Activated T-helper 2 cell treated with anti-CD3 and anti-CD28 coated beads, Interferon-gamma antibody, Interleukin-2, Interleukin-4, amounts not matched to agents 10 μg/mL and 5 μg/mL and 100 μg/mL, durations not matched to agents 14 hours and 24 hours and 36 hours (primary cell): ENCODE measurements at regions of chr4 and their contacts with region 1.

Region 1: DNA sequence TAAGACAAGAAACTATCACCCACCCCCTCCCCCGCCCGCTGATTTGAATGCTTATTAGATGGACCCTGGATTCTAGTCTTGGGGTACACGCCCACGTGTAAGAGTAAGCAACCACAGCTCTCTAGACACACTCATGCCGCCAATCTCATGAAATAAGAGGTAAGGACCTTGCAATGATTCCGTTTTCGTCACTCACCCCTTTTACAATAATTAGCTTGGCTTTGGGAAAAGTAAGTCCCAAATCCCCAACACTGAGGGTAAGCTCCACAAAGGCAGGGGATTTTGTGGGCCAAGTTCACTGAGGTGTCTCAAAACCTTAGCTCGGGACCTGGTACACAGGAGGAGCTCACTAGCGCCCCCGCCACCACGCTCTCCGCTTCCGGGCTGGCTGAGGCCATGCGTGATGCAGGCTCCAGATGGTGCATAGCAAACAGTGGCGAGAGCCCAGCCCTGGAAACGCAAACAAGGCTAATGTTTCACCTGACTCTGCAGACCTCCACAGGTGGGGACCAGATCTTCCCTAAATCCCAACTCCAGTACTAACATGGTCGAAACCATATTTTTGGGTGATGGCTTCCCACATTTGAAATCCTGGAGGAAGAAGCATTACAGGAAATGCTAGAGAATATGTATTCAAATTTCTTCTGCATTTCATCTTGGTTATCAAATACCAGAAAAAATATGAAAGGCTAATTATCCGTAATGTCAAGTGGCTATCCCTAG is 4.1 kb downstream of the PLAC8 start:
- DNase-seq: peak; percentile 84
- H3K4me3 Mint-ChIP-seq: peak overlapping the region; percentile 84
- H3K27ac Mint-ChIP-seq: peak overlapping the region; percentile 91
- H3K4me1 Mint-ChIP-seq: peaks cover 48% of the 10 kb centered on the region
- H3K27me3 Mint-ChIP-seq: peaks cover 2% of the 10 kb centered on the region

Region 2: DNA sequence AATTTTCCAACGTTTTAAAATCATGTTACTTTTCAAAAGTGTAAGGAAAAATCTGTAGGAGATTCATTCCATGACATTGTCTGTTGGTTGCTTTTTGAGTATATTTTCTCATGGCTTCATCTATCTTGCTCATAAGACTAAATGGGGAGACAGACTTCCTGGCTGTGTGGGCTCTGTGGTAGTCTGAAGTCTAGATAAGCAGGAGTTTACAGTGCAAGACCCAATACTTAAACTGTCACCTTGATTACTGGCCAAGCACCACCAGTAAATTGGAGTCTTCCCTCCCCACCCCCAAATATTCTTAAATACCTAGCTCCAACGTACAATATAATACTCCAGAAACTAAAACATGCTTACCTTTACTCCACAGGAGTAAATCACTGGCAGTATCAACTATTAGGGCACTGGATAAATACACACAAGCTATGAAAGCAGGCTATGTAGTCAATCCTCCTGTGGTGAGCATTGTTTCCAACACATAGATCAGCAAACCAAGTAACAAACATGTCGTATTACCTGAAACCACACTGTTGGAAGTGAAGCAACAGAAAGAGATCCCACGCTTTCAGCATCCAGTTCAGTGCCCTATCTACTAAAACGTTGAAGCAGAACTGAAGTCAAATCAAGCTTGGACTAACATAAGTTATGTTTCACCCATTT is 742.8 kb before region 1 on chr4:
- intact Hi-C with region 1: loop called (anchors 5 kb)
- DNase-seq: no peak
- H3K4me3 Mint-ChIP-seq: peak overlapping the region; percentile 11
- H3K27ac Mint-ChIP-seq: peak overlapping the region; percentile 37
- H3K4me1 Mint-ChIP-seq: peaks cover 57% of the 10 kb centered on the region
- H3K27me3 Mint-ChIP-seq: no peaks in the 10 kb centered on the region

Region 3: GRCh38 chr4:83034630-83035494 is 75.5 kb before region 1 on chr4 and contains the start of gene COPS4:
- intact Hi-C with region 1: loop called (anchors 1 kb)
- DNase-seq: peak; percentile 96
- H3K4me3 Mint-ChIP-seq: peak within 1 kb of the TSS; percentile 98
- H3K27ac Mint-ChIP-seq: peak within 1 kb of the TSS; percentile 100
- H3K4me1 Mint-ChIP-seq: peaks cover 18% of the 10 kb centered on the region
- H3K27me3 Mint-ChIP-seq: peaks cover 4% of the 10 kb centered on the region
- total RNA-seq, gene COPS4: 33.7 and 35.2 TPM in 2 replicates

Region 4: GRCh38 chr4:83083925-83084475 is 26.4 kb before region 1 on chr4:
- intact Hi-C with region 1: loop called (anchors 1 kb)
- DNase-seq: peak; percentile 68
- H3K4me3 Mint-ChIP-seq: no peak overlapping the region
- H3K27ac Mint-ChIP-seq: no peak overlapping the region
- H3K4me1 Mint-ChIP-seq: peaks cover 29% of the 10 kb centered on the region
- H3K27me3 Mint-ChIP-seq: no peaks in the 10 kb centered on the region

Region 5: GRCh38 chr4:83217721-83218522 is 107.5 kb after region 1 on chr4:
- intact Hi-C with region 1: loop called (anchors 1 kb)
- DNase-seq: peak; percentile 74
- H3K4me3 Mint-ChIP-seq: peak overlapping the region; percentile 56
- H3K27ac Mint-ChIP-seq: peak overlapping the region; percentile 84
- H3K4me1 Mint-ChIP-seq: peaks cover 64% of the 10 kb centered on the region
- H3K27me3 Mint-ChIP-seq: peaks cover 13% of the 10 kb centered on the region

Region 6: GRCh38 chr4:83252782-83253405 is 142.5 kb after region 1 on chr4:
- intact Hi-C with region 1: loop called (anchors 2 kb)
- DNase-seq: peak; percentile 66
- H3K4me3 Mint-ChIP-seq: no peak overlapping the region
- H3K27ac Mint-ChIP-seq: no peak overlapping the region
- H3K4me1 Mint-ChIP-seq: peaks cover 12% of the 10 kb centered on the region
- H3K27me3 Mint-ChIP-seq: peaks cover 9% of the 10 kb centered on the region

Region 7: GRCh38 chr4:83356899-83357661 is 246.7 kb after region 1 on chr4:
- intact Hi-C with region 1: loop called (anchors 5 kb)
- DNase-seq: no peak
- H3K4me3 Mint-ChIP-seq: no peak overlapping the region
- H3K27ac Mint-ChIP-seq: peak overlapping the region; percentile 85
- H3K4me1 Mint-ChIP-seq: peaks cover 24% of the 10 kb centered on the region
- H3K27me3 Mint-ChIP-seq: no peaks in the 10 kb centered on the region